ENCODE measurements at regions of chr4 and their contacts with region 1.

Region 1: DNA sequence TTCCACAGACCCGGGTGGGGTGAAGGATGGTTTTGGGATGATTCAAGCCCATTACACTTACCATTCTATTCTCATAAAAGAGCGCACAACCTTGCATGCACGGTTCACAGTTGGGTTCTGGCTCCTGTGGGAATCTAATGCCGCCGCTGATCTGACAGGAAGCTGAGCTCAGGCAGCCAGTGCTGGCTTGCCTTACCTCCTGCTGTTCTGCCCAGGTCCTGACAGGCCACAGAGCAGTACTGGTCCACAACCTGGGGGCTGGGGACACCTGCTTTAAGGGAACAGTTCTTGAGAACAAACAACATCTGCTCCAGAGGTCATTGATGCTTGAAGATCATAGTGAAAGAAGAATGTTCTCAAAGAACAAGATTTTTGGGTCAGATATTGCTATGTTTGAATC is 8.0 kb upstream of the HS3ST1 start:
- DNase-seq: no peak
- H3K4me3 ChIP-seq: no peak overlapping the region
- H3K27ac ChIP-seq: no peak overlapping the region
- H3K4me1 ChIP-seq: peaks cover 0 to 4% (median 1%) of the 10 kb centered on the region in 4 experiments; a peak in 2 of 7 replicates
- H3K27me3 ChIP-seq: no peaks in the 10 kb centered on the region
- CTCF ChIP-seq: no peak
- EP300 ChIP-seq: no peak
- POLR2A ChIP-seq: no peak
- RAD21 ChIP-seq: no peak

Region 2: GRCh38 chr4:11424000-11424399 is 12.7 kb before region 1 on chr4:
- CTCF ChIA-PET with region 1: interaction called, 15 read pairs
- POLR2A ChIA-PET with region 1: no interaction called
- DNase-seq: no peak
- H3K4me3 ChIP-seq: no peak overlapping the region
- H3K27ac ChIP-seq: no peak overlapping the region
- H3K4me1 ChIP-seq: peaks cover 3 to 17% (median 6%) of the 10 kb centered on the region in 4 experiments; a peak in 5 of 7 replicates
- H3K27me3 ChIP-seq: peaks cover 5 to 32% (median 29%) of the 10 kb centered on the region in 4 experiments
- CTCF ChIP-seq: peak in 2 of 3 experiments; percentile 51 to 52; a peak in 3 of 4 replicates
- EP300 ChIP-seq: no peak
- POLR2A ChIP-seq: no peak
- RAD21 ChIP-seq: peak; percentile 73 to 76